ENCODE measurements at regions of chr3 and their contacts with region 1.

Region 1: DNA sequence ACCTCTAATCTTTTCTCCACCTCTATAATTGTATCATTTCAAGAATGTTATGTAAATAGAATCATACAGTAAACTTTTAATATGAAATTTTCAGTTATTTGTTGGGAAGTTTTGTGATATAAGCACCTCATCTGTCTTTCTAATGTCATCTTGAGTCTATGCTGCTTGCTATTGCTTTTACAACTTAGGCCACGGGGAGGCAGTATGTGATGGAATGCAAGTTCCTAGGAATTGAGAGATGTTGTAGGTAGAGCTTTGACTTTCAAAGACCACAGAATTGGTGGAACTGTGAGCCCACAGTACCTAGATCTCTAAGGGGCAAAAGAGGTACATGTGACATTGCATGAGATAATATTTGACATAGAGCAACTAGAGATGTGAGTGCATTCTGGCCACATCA is 328.3 kb downstream of the MFSD1 start:
- DNase-seq: peak; percentile 21
- H3K4me3 ChIP-seq: no peak overlapping the region
- H3K27ac ChIP-seq: no peak overlapping the region
- H3K4me1 ChIP-seq: no peaks in the 10 kb centered on the region
- H3K27me3 ChIP-seq: no peaks in the 10 kb centered on the region
- CTCF ChIP-seq: peak; percentile 15 to 38 (median 36)
- EP300 ChIP-seq: no peak
- POLR2A ChIP-seq: no peak

Region 2: GRCh38 chr3:159252772-159253384 is 122.8 kb after region 1 on chr3:
- in situ Hi-C with region 1: loop called in 1 of 4 experiments (anchors 10 kb)
- intact Hi-C with region 1: no loop called
- DNase-seq: no peak
- H3K4me3 ChIP-seq: no peak overlapping the region
- H3K27ac ChIP-seq: no peak overlapping the region
- H3K4me1 ChIP-seq: no peaks in the 10 kb centered on the region
- H3K27me3 ChIP-seq: no peaks in the 10 kb centered on the region
- CTCF ChIP-seq: peak; percentile 41 to 72 (median 59)
- EP300 ChIP-seq: no peak
- POLR2A ChIP-seq: no peak